Endothelial cell of umbilical vein (primary cell): ENCODE measurements at regions of chr10 and their contacts with region 1.

Region 1: DNA sequence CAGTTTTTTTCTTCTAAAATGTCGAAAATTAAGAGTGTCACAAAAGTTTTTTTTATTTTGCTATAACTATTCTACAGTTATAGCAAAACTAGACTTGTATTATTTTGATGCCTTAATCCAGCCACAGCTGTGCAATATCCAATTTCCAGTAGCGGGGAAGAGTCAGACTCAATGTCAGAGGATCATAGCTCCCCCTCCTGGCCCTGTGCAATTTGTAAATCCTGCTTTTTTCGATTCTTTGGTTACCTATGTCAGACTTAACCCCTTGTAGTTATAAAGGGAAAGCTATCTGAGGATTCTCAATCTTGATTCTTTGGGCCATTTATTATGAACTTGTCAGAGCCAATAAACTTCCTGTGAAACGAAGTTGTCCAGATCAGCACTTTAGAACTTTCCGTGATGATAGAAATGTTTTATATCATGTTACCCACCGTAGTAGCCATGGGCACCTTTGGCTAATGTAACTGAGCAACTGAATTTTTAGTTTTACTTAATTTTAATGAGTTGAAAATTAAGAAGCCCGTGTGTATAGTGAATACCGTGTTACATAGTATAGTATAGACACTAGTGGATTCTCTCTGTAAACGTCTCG is 87.7 kb upstream of the PRKCQ start:
- DNase-seq: peak; percentile 38
- H3K4me3 ChIP-seq: no peak overlapping the region
- H3K27ac ChIP-seq: no peak overlapping the region
- H3K4me1 ChIP-seq: peaks cover 11% of the 10 kb centered on the region
- H3K27me3 ChIP-seq: peaks cover 0 to 4% of the 10 kb centered on the region in 2 experiments
- CTCF ChIP-seq: peak; percentile 49
- POLR2A ChIP-seq: no peak

Region 2: DNA sequence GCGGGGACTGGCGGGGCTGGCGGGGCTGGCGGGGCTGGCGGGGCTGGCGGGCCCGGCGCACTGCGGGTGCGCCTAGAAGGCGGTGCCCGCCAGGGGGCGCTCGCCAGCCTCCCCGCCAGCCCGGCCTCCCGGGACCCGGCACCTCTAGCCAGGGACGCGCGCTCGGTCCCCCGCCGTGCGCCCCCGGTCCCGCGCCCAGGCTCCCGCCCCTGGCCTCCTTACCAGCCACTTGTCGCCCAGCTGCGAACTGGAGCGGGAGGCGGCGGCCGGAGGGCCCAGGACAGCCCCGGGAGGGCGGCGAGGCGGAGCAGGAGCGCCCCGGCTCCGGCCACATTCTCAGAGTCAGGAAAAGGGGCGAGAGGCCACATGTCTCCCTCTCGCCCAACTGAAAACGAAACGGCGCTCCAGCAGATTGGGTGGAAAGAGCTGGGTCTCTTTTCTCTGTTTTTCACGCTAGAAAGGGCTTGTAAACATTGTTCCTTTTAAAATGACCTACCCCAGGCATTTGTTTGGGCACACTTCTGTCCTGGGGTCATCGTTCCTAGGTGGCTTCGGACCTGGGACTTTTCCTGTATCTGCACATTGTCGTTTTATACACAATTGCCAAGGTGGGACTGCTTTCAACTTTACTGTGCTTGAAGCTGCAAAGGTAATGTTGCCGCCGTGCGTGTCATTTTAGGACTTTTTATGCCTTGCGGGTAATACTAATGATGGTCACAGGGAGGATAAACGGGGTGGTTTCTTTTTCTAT is 87.3 kb before region 1 on chr10:
- CTCF ChIA-PET with region 1: interaction called, 8 read pairs
- POLR2A ChIA-PET with region 1: no interaction called
- dilution Hi-C with region 1: no loop called
- intact Hi-C with region 1: loop called (anchors 1 kb)
- DNase-seq: peak; percentile 68
- H3K4me3 ChIP-seq: peak overlapping the region; percentile 75 to 92 (median 92)
- H3K27ac ChIP-seq: peak overlapping the region; percentile 60
- H3K4me1 ChIP-seq: peaks cover 10% of the 10 kb centered on the region
- H3K27me3 ChIP-seq: peaks cover 14 to 30% of the 10 kb centered on the region in 2 experiments
- CTCF ChIP-seq: peak; percentile 58
- POLR2A ChIP-seq: peak; percentile 28

Region 3: DNA sequence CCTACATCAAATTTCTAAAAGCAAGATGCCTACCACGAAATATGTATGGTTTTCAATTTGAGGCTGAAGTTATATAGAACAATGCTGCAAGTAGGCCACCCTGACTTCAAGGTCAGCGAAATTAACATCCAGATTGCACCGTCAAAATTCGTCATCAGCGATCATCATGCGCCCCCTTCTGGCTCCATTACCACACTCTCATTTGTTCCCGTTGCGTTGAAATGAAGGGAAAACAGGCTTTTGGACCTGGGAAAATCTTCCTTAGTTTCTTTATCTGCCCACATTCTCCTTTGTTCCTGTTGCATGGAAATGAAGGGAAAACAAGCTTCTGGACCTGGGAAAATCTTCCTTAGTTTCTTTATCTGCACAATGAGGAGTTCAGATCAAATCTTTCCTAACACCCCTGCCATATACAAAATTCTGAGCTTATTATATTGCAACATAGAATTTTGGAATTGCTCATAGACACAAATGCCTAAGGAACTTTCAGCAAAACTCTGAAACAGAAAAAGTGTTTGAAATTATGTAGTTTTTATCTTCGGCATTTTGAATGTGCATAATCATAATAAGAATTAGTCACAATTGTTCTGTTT is 10.5 kb after region 1 on chr10:
- CTCF ChIA-PET with region 1: interaction called, 14 read pairs
- POLR2A ChIA-PET with region 1: no interaction called
- dilution Hi-C with region 1: no loop called
- intact Hi-C with region 1: loop called (anchors 1 kb)
- DNase-seq: peak; percentile 55
- H3K4me3 ChIP-seq: no peak overlapping the region
- H3K27ac ChIP-seq: no peak overlapping the region
- H3K4me1 ChIP-seq: no peaks in the 10 kb centered on the region
- H3K27me3 ChIP-seq: peaks cover 5 to 11% of the 10 kb centered on the region in 2 experiments
- CTCF ChIP-seq: peak; percentile 71 to 77
- POLR2A ChIP-seq: no peak

Region 4: DNA sequence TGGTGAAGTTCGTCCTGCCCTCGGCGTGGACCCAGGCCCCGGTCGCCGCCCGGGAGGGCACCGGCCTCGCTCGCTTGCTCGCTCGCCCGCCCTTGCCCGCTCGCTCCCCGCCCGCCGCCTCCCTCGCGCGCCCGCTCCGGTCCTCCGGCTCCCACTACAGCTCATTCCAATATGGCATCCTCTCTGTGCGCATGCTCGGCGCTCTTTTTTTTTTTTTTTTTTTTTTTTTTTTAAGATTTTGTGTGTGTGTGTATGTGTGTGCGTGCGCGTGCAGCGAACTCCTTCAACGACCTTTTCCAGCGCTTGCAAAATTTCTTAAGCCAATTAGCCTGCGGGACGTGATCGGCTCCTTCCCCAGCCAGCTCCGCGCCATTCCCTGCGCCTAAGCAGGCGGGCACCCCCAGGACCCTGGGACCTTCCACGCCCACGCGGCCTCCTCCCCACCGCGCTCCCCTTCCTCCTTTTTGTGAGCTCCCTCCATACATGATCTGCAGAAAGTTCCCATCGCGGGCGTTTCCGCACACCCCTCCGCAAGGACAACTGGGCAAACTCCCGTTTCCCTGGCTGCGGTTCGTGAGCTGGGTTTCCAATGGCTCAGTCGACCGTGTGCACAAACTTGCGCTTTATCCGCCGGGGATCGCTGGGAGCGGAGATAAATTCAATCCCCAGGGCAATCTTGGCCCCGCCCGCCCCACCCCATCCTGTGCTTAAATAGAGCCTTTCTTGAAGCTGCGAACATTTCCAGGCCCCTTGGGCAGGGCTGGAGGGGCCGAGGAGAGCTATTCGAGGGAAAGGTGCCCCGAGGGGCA is 743.3 kb after region 1 on chr10 and contains the start of gene SFMBT2:
- CTCF ChIA-PET with region 1: interaction called, 20 read pairs
- POLR2A ChIA-PET with region 1: no interaction called
- dilution Hi-C with region 1: no loop called
- intact Hi-C with region 1: loop called (anchors 1 kb)
- DNase-seq: peak; percentile 65
- H3K4me3 ChIP-seq: peak within 1 kb of the TSS; percentile 23 to 51 (median 30)
- H3K27ac ChIP-seq: no peak within 1 kb of the TSS
- H3K4me1 ChIP-seq: peaks cover 26% of the 10 kb centered on the region
- H3K27me3 ChIP-seq: peaks cover 55 to 76% of the 10 kb centered on the region in 2 experiments
- CTCF ChIP-seq: no peak
- POLR2A ChIP-seq: no peak
- total RNA-seq, gene SFMBT2: 0.44 and 0.64 TPM in 2 replicates

Region 5: DNA sequence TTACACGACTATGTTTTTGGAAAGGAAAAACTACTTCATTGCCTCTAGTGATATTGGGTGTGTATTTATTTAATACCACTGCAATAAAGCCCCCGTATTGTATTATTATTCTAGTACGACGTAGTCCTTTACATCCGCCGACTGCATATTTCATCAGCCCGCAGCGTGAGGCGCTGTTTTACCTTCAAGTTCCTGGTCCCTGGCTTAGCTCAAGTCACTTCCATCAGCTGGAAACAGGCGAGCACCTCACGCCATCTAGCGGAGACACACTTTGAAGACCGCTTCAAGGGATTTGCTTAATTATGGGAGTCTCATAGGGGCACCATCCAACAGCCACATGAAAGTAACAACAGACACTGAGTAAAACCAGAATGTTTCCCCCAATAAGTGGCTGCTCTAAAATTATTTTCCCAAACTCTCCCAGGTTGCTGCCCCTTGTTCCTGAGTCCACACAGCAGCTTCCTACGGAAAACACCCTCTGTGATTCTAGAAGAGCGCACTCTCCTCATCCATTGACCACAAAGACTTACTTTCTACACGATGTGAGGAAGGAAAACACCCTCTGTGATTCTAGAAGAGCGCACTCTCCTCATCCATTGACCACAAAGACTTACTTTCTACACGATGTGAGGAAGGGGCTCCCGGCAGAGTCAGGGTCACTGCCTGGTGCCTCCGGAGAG is 1019.6 kb after region 1 on chr10:
- CTCF ChIA-PET with region 1: interaction called, 15 read pairs
- POLR2A ChIA-PET with region 1: no interaction called
- dilution Hi-C with region 1: no loop called
- intact Hi-C with region 1: no loop called
- DNase-seq: peak; percentile 86
- H3K4me3 ChIP-seq: no peak overlapping the region
- H3K27ac ChIP-seq: no peak overlapping the region
- H3K4me1 ChIP-seq: no peaks in the 10 kb centered on the region
- H3K27me3 ChIP-seq: peaks cover 0 to 1% of the 10 kb centered on the region in 2 experiments
- CTCF ChIP-seq: peak; percentile 83 to 88
- POLR2A ChIP-seq: no peak